ENCODE measurements at regions of chr17 and their contacts with region 1.

Region 1: DNA sequence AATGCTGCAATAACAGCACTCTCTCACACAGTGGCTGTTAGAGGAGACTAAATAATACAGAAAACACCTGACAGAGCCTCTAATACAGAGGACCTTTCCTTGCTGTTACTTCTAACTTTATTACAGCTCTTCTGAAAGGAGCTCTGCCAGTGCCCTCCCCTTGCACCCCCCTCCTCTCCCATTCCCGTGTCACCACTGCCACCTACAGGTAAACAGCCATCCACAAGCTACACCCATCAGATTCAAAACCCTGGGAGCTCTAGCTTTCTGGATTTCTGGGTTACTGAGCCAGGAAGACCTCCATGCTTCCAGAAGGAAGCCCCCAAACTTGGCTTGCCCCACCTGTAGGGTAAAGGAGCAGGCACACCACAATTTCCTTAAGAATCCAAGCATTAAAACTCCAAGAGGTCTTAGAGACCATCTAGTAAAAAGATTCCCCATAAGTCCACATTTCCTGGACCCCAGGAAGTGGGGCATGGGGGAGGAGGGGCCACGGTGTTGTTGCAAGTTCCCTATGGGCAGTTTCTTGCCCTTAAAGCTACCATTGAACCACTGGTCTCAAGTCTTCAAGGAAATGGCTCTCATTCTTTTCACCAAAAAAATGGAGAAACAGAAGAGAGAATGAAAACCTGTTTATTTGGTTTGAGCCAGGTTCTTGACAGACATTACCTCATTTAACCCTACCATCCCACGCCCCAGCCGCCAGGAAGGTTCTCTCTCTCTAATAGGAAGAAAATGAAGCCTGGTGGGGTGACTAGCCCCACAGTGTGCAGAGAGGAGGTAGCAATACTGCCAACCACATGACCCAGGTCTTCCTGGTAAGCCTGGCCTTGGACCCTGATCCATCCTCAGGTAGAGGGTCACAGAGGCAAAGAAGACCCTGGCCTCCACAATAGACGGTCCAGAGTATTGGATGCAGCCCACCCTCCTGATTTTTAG is 52.8 kb downstream of the TOM1L2 start:
- DNase-seq: peak; percentile 39
- ATAC-seq: peak; percentile 99
- H3K4me3 ChIP-seq: no peak overlapping the region
- H3K27ac ChIP-seq: no peak overlapping the region
- H3K4me1 ChIP-seq: peaks cover 11% of the 10 kb centered on the region
- H3K27me3 ChIP-seq: no peaks in the 10 kb centered on the region
- CTCF ChIP-seq: peak; percentile 76 to 89 (median 87)
- EP300 ChIP-seq: no peak
- POLR2A ChIP-seq: no peak
- RAD21 ChIP-seq: peak; percentile 98

Region 2: GRCh38 chr17:17818088-17818526 is 101.3 kb before region 1 on chr17:
- CTCF ChIA-PET with region 1: interaction called, 20 read pairs
- POLR2A ChIA-PET with region 1: no interaction called
- RAD21 ChIA-PET with region 1: interaction called, 10 read pairs
- SMC1A ChIA-PET with region 1: interaction called, 6 read pairs
- in situ Hi-C with region 1: loop called (anchors 5 kb)
- intact Hi-C with region 1: no loop called
- DNase-seq: no peak
- ATAC-seq: peak; percentile 40
- H3K4me3 ChIP-seq: no peak overlapping the region
- H3K27ac ChIP-seq: no peak overlapping the region
- H3K4me1 ChIP-seq: peaks cover 30% of the 10 kb centered on the region
- H3K27me3 ChIP-seq: no peaks in the 10 kb centered on the region
- CTCF ChIP-seq: no peak
- EP300 ChIP-seq: no peak
- POLR2A ChIP-seq: no peak
- RAD21 ChIP-seq: no peak

Region 3: GRCh38 chr17:17884391-17885357 is 34.8 kb before region 1 on chr17:
- CTCF ChIA-PET with region 1: interaction called, 95 read pairs
- POLR2A ChIA-PET with region 1: interaction called, 5 read pairs
- RAD21 ChIA-PET with region 1: interaction called, 8 read pairs
- SMC1A ChIA-PET with region 1: interaction called, 5 read pairs
- in situ Hi-C with region 1: no loop called
- intact Hi-C with region 1: no loop called
- DNase-seq: no peak
- ATAC-seq: no peak
- H3K4me3 ChIP-seq: no peak overlapping the region
- H3K27ac ChIP-seq: no peak overlapping the region
- H3K4me1 ChIP-seq: peaks cover 3% of the 10 kb centered on the region
- H3K27me3 ChIP-seq: no peaks in the 10 kb centered on the region
- CTCF ChIP-seq: no peak
- EP300 ChIP-seq: no peak
- POLR2A ChIP-seq: no peak
- RAD21 ChIP-seq: no peak

Region 4: DNA sequence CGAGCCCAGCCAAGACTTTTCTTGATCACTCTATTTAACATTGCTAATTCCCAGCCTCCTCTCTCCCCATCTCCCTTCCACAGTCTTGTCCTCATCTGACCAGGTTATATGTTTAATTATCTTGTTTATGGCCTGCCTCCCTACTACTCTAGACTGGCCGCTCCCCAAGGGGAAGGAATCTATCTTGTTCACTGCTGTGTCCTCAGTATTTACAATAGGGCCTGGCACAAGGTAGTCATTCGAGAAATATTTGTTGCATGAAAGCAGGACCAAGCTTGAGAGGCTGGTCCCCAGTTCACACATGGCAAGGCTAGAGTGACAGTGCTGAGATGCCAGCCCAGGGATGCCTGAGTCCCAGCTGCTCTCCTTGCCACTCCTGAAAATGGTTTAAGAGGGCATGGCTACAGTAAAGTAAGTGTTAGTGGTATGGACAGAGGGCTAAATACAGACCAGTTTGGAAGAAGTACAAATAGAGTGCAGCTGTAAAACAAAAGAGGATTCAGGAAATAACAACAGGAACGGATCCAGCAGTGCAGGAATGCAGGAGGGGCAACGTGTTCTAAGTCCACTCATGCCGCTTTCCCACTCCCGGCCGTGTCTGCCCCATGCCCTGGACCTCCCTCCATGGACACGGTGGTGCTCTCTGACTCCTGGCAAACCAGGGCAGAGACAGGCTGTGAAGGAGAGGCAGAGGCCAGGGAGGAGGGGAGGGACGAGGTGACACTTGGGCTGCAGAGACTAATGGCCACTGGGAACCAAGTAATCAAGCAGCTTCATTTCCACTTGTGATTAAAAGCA is 12.8 kb before region 1 on chr17:
- CTCF ChIA-PET with region 1: interaction called, 12 read pairs
- POLR2A ChIA-PET with region 1: interaction called, 3 read pairs
- RAD21 ChIA-PET with region 1: interaction called, 5 read pairs
- SMC1A ChIA-PET with region 1: interaction called, 17 read pairs
- in situ Hi-C with region 1: no loop called
- intact Hi-C with region 1: no loop called
- DNase-seq: no peak
- ATAC-seq: no peak
- H3K4me3 ChIP-seq: no peak overlapping the region
- H3K27ac ChIP-seq: no peak overlapping the region
- H3K4me1 ChIP-seq: no peaks in the 10 kb centered on the region
- H3K27me3 ChIP-seq: no peaks in the 10 kb centered on the region
- CTCF ChIP-seq: no peak
- EP300 ChIP-seq: no peak
- POLR2A ChIP-seq: no peak
- RAD21 ChIP-seq: no peak

Region 5: GRCh38 chr17:17959520-17960361 is 40.3 kb after region 1 on chr17:
- CTCF ChIA-PET with region 1: interaction called, 11 read pairs
- POLR2A ChIA-PET with region 1: interaction called, 3 read pairs
- RAD21 ChIA-PET with region 1: interaction called, 11 read pairs
- SMC1A ChIA-PET with region 1: interaction called, 12 read pairs
- in situ Hi-C with region 1: no loop called
- intact Hi-C with region 1: no loop called
- DNase-seq: peak; percentile 68
- ATAC-seq: peak; percentile 85
- H3K4me3 ChIP-seq: peak overlapping the region; percentile 6; the same call in 1 of the 2 replicates
- H3K27ac ChIP-seq: peak overlapping the region; percentile 63
- H3K4me1 ChIP-seq: peaks cover 23% of the 10 kb centered on the region
- H3K27me3 ChIP-seq: no peaks in the 10 kb centered on the region
- CTCF ChIP-seq: no peak
- EP300 ChIP-seq: no peak
- POLR2A ChIP-seq: no peak
- RAD21 ChIP-seq: no peak

Region 6: DNA sequence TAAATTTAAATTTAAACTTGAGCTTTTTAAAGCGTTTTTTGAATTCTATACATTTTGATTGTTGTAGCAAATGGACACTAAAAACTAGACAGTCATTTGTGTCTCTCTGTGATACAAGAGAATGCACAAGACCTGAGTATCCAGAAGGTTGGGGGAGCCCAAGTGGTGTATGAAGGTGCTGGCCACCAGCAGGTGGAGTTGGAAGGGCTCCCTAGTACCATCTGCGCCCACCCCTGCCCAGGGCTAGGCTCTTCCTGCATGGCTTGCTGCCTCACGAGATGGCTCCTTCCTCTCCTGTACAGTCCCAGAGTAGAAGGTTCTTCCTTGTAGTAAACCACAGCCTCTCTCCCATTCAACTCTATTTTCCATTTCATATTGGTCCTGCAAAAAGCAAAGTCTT is 136.8 kb after region 1 on chr17:
- CTCF ChIA-PET with region 1: no interaction called
- POLR2A ChIA-PET with region 1: no interaction called
- RAD21 ChIA-PET with region 1: no interaction called
- SMC1A ChIA-PET with region 1: no interaction called
- in situ Hi-C with region 1: no loop called
- intact Hi-C with region 1: no loop called
- DNase-seq: no peak
- ATAC-seq: no peak
- H3K4me3 ChIP-seq: no peak overlapping the region
- H3K27ac ChIP-seq: no peak overlapping the region
- H3K4me1 ChIP-seq: no peaks in the 10 kb centered on the region
- H3K27me3 ChIP-seq: no peaks in the 10 kb centered on the region
- CTCF ChIP-seq: no peak
- EP300 ChIP-seq: no peak
- POLR2A ChIP-seq: no peak
- RAD21 ChIP-seq: no peak

Region 7: DNA sequence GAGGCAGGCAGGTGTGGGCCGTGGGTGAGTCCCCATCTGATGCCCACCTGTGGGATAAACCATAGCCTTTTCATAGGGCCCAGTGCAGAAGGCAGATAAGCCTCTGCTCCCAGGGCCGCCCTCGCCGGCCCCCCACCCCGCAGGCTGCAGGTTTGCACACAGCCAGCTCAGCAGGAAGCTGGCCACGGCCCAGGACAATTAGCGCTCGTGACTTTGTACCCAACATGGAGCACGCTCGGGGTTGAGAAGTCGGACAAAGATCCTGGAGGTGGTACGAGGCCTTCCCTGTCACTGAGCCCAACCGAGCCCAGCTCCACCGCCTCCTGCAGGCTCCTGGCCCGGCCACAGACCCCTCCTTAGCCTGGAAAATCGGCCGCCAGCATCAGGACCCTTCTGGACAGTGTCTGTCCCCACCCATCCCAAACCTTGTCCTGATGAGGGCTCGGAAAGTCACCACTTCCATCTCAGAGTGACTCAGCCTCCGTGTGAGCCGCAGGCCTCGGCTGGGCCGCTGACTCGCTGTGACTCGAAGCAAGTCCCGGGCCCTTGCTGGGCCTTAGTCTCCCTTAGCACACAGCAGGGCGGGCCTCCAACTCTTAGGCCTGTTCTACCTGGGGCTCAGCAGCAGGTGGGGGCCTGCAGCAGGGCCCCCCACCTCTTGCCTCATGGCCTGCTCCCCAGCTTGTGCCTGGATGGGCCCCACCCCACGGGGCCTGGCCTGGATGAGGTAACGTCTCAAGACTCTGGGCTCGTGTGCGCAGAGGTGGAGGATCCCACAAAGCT is 1062.4 kb after region 1 on chr17:
- CTCF ChIA-PET with region 1: no interaction called
- POLR2A ChIA-PET with region 1: no interaction called
- RAD21 ChIA-PET with region 1: no interaction called
- SMC1A ChIA-PET with region 1: no interaction called
- in situ Hi-C with region 1: no loop called
- intact Hi-C with region 1: no loop called
- DNase-seq: no peak
- ATAC-seq: no peak
- H3K4me3 ChIP-seq: no peak overlapping the region
- H3K27ac ChIP-seq: no peak overlapping the region
- H3K4me1 ChIP-seq: no peaks in the 10 kb centered on the region
- H3K27me3 ChIP-seq: no peaks in the 10 kb centered on the region
- CTCF ChIP-seq: no peak
- EP300 ChIP-seq: no peak
- POLR2A ChIP-seq: no peak
- RAD21 ChIP-seq: no peak